Gastrocnemius medialis (tissue), 4 donors: ENCODE measurements at regions of chr3 and their contacts with region 1.

Region 1: GRCh38 chr3:9249273-9250192 is at the start of gene SRGAP3:
- DNase-seq: peak; percentile 77 to 91
- ATAC-seq: peak; percentile 70 to 76
- H3K4me3 ChIP-seq: peak within 1 kb of the TSS; percentile 42 to 56 (median 52)
- H3K27ac ChIP-seq: peak within 1 kb of the TSS; percentile 74 to 85 (median 78)
- H3K4me1 ChIP-seq: peaks cover 40 to 41% of the 10 kb centered on the region in 2 donors
- H3K27me3 ChIP-seq: no peaks in the 10 kb centered on the region
- CTCF ChIP-seq: peak in 4 of 5 experiments; percentile 30 to 44 (median 40)
- POLR2A ChIP-seq: peak; percentile 52
- total RNA-seq, gene SRGAP3: 1.3 to 2.3 (median 1.8) TPM

Region 2: DNA sequence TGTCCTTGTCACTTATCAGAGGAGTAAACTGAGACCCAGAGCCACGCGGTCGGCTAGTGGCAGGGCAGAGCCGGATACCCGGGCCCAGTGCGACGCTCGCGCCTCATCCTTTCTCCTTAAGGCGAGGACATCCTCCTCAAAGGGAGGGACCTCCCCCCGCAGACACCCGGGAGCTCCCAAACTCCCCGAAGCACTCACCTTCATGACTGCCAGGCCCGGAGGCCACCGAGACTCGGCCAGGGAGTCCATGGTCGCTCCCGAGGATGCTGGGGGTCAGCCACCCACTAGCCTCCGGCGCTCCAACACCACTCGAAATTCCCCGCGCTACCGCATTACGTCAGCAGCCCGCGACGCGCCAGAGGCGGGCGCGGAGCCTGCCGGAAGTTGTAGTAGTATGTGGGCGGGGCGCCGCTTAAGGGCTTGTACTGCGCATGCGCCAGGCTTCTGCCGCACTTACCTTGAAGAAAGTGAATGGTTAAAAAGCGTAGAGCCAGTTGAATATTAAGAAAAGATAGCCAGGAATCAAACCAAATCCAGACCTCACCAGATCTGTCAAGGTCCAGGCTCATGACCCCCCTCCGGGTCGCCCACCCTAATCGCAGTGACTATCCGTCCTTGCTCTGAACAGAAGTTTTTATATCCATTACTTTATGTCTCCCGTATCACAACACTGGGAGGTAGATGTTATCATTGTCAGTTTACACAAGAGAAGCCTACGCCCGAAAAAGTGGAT is 286.2 kb before region 1 on chr3 and contains the start of gene RAD18:
- in situ Hi-C with region 1: no loop called
- intact Hi-C with region 1: loop called (anchors 5 kb)
- DNase-seq: peak; percentile 63 to 86
- ATAC-seq: peak; percentile 98 to 99
- H3K4me3 ChIP-seq: peak within 1 kb of the TSS; percentile 82 to 89 (median 88)
- H3K27ac ChIP-seq: peak within 1 kb of the TSS; percentile 76 to 89 (median 81)
- H3K4me1 ChIP-seq: peaks cover 7 to 9% of the 10 kb centered on the region in 2 donors
- H3K27me3 ChIP-seq: no peaks in the 10 kb centered on the region
- CTCF ChIP-seq: no peak
- POLR2A ChIP-seq: no peak
- total RNA-seq, gene RAD18: 1.8 to 5.8 (median 2.3) TPM

Region 3: GRCh38 chr3:9036404-9037131 is 213.0 kb before region 1 on chr3:
- in situ Hi-C with region 1: no loop called
- intact Hi-C with region 1: loop called (anchors 5 kb)
- DNase-seq: peak; percentile 35 to 77
- ATAC-seq: peak; percentile 65 to 80
- H3K4me3 ChIP-seq: no peak overlapping the region
- H3K27ac ChIP-seq: peak overlapping the region; percentile 25 to 58 (median 32)
- H3K4me1 ChIP-seq: peaks cover 6 to 12% of the 10 kb centered on the region in 2 donors
- H3K27me3 ChIP-seq: no peaks in the 10 kb centered on the region
- CTCF ChIP-seq: no peak
- POLR2A ChIP-seq: no peak

Region 4: GRCh38 chr3:9153904-9154619 is 95.5 kb before region 1 on chr3:
- in situ Hi-C with region 1: no loop called
- intact Hi-C with region 1: loop called (anchors 1 kb)
- DNase-seq: peak; percentile 73 to 92
- ATAC-seq: peak; percentile 81 to 84
- H3K4me3 ChIP-seq: peak overlapping the region; percentile 12 to 42 (median 28)
- H3K27ac ChIP-seq: peak overlapping the region; percentile 81 to 87 (median 82)
- H3K4me1 ChIP-seq: peaks cover 21 to 29% of the 10 kb centered on the region in 2 donors
- H3K27me3 ChIP-seq: no peaks in the 10 kb centered on the region
- CTCF ChIP-seq: no peak
- POLR2A ChIP-seq: peak in 1 of 2 donors; percentile 8

Region 5: GRCh38 chr3:9179826-9180763 is 69.4 kb before region 1 on chr3:
- in situ Hi-C with region 1: no loop called
- intact Hi-C with region 1: loop called (anchors 2 kb)
- DNase-seq: no peak
- ATAC-seq: no peak
- H3K4me3 ChIP-seq: no peak overlapping the region
- H3K27ac ChIP-seq: no peak overlapping the region
- H3K4me1 ChIP-seq: peaks cover 10 to 25% of the 10 kb centered on the region in 2 donors
- H3K27me3 ChIP-seq: no peaks in the 10 kb centered on the region
- CTCF ChIP-seq: no peak
- POLR2A ChIP-seq: no peak

Region 6: DNA sequence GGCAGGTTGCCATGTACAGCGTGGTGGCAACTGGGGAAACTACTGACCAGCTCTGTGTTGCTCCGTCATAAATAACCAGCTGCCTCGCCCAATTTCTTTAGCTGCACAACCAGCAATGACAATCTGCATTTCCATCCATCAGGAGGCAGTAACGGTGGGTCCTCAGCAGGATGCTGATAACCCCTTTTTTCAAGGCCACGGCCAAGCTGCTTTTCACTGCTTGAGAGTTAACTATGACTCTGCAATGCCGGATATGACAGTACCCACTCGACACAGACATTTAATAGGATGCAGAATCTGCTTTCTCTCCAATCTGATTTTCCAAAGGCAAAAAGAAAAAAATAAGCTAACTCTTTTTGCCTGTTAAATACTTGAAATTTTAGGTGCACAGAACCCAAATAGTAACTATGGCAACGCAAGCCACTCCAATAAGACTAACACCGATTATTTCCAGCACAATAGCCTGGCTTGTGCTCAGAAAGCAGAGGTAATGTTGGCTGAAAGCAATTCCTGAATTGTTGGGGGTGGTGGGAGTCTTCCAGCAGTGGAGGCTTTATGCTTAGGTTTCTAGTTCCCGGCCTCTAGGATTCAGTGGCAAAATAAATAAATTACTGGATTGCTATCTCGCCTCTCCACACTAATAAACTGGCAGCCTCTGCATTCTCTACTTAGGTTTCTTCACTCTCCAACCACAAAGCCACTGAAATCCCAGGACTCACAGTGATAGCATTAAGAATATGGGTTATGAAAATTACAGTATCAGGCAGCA is 31.1 kb after region 1 on chr3:
- in situ Hi-C with region 1: no loop called
- intact Hi-C with region 1: loop called (anchors 2 kb)
- DNase-seq: no peak
- ATAC-seq: no peak
- H3K4me3 ChIP-seq: no peak overlapping the region
- H3K27ac ChIP-seq: no peak overlapping the region
- H3K4me1 ChIP-seq: no peaks in the 10 kb centered on the region
- H3K27me3 ChIP-seq: no peaks in the 10 kb centered on the region
- CTCF ChIP-seq: no peak
- POLR2A ChIP-seq: no peak

Region 7: DNA sequence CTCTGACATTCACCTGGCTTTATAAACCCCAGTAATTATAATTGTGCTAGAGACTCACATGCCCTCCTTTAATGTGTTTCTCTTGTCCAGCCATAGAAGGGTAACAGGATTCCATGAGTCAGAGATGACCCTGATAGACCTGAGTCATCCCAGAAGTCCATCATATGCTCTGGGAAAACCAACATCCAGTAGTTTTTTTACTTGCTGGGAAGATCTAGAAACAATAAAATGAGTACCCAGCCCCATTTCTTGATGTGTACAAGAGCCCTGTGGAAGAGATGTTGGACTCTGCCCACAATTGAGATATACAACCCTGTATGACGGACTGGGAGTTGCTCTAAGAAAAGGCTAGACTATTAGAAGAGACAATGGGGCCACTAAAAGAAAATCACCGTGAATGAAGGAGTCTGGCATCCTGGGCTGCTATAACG is 91.0 kb after region 1 on chr3:
- in situ Hi-C with region 1: no loop called
- intact Hi-C with region 1: no loop called
- DNase-seq: no peak
- ATAC-seq: peak in 1 of 2 donors; percentile 46
- H3K4me3 ChIP-seq: no peak overlapping the region
- H3K27ac ChIP-seq: no peak overlapping the region
- H3K4me1 ChIP-seq: no peaks in the 10 kb centered on the region
- H3K27me3 ChIP-seq: no peaks in the 10 kb centered on the region
- CTCF ChIP-seq: no peak
- POLR2A ChIP-seq: no peak

Region 8: DNA sequence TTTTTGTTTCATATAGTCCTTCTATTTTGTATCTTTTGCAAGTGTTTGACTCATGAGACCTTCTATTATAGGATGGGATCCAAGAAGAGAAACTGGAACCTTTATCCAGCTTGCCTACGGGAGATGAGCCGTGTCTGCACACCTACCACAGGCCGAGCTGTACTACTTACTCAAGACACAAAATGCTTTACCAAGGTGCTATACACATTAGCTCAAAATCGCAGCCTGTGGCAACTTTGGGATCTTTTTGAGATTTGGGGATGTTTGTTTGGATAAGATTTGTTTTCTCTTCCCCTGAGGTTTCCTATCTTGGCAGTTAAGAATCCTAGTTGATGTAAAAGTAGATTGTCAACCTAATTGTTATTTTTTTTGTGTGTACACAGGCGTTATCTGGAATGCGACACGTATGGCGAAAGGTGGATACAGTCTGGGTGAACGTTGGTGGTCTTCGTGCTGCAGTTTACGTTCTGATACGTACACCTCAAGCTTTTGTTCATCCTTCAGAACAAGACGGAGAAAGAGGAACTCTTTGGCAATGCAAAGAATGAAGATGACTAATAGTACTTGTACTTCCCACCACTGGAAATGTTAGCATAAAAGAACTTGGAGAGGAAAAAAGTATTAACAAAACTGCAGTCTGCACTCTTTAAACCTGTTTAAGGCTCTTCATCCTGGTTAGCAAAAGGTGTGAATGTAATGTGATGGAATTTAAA is 134.8 kb after region 1 on chr3:
- in situ Hi-C with region 1: no loop called
- intact Hi-C with region 1: no loop called
- DNase-seq: no peak
- ATAC-seq: no peak
- H3K4me3 ChIP-seq: no peak overlapping the region
- H3K27ac ChIP-seq: peak overlapping the region in 2 of 4 donors; percentile 14 to 45
- H3K4me1 ChIP-seq: no peaks in the 10 kb centered on the region
- H3K27me3 ChIP-seq: no peaks in the 10 kb centered on the region
- CTCF ChIP-seq: no peak
- POLR2A ChIP-seq: no peak